HEK293T (cell line): ENCODE measurements at regions of chr10 and their contacts with region 1.

Region 1: DNA sequence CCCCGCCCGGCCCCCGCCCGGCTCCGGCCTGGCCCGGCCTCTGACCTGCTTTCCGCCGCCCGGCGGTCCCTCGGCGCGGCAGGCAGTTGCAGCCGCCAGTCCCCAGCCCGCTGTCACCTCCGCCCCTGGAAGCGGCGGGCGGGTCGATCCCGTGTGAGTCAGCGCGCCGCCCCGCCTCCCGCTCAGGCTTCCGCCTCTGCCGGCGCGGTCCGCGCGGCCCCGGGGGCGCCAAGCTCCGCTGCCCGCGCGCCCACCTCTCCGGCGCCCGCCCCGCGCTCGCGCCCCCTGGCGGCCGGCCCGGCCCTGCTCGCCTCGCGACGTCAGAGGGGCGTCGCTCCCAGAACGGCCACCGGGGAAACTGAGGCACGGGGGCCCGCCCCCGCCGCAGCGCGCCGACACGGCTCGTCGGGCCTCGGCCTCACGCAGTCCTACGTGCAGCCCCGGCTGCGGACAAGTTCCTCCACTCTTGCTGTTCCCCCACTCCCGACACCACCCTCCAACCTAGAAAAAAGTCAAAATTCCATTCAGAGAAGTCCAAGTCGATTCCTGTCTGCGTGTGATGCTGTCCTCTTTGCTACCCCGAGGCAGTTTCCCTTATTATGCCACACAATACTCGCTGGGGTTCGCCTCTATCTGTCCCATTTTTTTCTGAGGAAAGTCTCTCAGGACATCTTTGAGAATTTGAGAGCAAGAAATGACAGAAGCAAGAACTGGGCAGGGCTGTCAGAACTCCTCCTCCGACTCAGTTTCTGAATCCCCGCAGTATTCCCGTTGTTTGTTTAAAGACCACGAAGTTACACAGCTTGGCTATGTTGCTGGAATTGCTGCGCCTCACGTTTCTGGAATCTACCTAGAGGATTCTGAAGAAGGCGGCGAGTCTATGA is at the start of gene DNMBP:
- DNase-seq: peak; percentile 97

Region 2: GRCh38 chr10:99993701-99994689 is 16.0 kb before region 1 on chr10:
- CTCF ChIA-PET with region 1: interaction called, 40 read pairs
- POLR2A ChIA-PET with region 1: interaction called, 7 read pairs
- DNase-seq: peak; percentile 54

Region 3: DNA sequence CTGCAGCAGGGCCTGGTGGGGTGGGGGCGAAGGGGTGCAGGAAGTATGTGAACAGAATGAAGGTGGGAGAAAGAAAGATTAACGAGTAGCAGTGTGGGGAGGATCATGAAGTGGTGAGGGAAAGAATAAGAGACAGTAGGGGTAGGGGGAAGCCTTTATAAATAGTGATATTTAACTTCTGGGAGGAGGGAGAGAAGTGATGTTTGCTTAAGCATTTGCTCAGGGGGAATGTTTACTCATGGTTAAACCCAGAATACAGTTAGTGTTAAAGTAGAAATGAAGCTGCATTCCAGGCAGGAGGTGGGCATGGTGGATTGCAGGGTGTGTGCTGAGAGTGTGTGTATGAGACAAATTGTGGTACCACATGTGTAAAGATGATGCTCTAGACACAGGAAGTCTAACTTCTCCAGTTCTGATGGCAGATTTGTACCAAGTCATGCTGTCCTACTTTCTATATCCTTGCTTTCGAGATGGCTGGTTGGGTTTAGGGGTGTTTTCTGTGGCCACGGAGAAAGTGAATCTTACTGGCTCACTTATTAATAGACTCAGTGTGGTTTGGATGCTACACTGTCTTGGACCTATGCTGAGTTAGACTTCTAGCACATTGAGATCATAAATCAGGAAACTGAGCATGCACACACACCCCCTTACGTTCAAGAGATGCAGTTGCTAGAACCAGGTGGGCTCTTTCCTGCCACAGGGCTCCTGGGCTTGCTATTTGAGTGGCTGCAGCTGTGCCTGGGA is 10.3 kb after region 1 on chr10:
- CTCF ChIA-PET with region 1: interaction called, 12 read pairs
- POLR2A ChIA-PET with region 1: no interaction called
- DNase-seq: no peak